Calu3 (cell line): ENCODE measurements at regions of chr14 and their contacts with region 1.

Region 1: DNA sequence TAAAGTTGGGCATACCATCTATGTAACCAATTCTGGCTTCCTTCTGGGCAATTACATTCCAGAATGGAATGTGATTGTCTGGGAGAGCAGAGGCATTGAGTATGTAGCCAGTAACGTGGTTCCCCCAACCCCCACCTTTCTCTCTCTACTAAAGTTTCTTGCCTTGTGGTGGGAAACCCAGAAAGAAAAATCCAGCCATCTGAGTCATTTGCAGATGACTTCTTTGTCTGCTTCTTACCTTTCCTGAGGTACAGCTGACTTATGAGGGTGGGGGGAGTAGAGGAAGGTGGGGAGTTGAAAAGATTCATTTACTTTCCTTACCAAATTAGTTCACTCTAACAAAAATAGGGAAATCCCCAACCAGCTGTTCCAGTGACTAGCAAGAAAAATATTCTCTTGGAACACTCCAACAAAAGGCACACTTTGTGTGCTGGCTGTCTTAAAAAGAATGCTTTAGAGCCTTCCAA is 112.1 kb upstream of the FRMD6 start:
- DNase-seq: peak; percentile 62
- H3K4me3 Mint-ChIP-seq: no peak overlapping the region
- H3K27ac Mint-ChIP-seq: peak overlapping the region; percentile 73
- H3K4me1 Mint-ChIP-seq: peaks cover 53% of the 10 kb centered on the region
- H3K27me3 Mint-ChIP-seq: no peaks in the 10 kb centered on the region
- CTCF ChIP-seq: no peak

Region 2: GRCh38 chr14:50954811-50955372 is 584.7 kb before region 1 on chr14:
- CTCF ChIA-PET with region 1: no interaction called
- intact Hi-C with region 1: loop called (anchors 5 kb)
- DNase-seq: no peak
- H3K4me3 Mint-ChIP-seq: no peak overlapping the region
- H3K27ac Mint-ChIP-seq: peak overlapping the region; percentile 81
- H3K4me1 Mint-ChIP-seq: peaks cover 19% of the 10 kb centered on the region
- H3K27me3 Mint-ChIP-seq: no peaks in the 10 kb centered on the region
- CTCF ChIP-seq: peak; percentile 45

Region 3: GRCh38 chr14:51395361-51395849 is 144.2 kb before region 1 on chr14:
- CTCF ChIA-PET with region 1: no interaction called
- intact Hi-C with region 1: loop called (anchors 10 kb)
- DNase-seq: no peak
- H3K4me3 Mint-ChIP-seq: peak overlapping the region; percentile 33
- H3K27ac Mint-ChIP-seq: peak overlapping the region; percentile 95
- H3K4me1 Mint-ChIP-seq: peaks cover 48% of the 10 kb centered on the region
- H3K27me3 Mint-ChIP-seq: no peaks in the 10 kb centered on the region
- CTCF ChIP-seq: no peak

Region 4: GRCh38 chr14:51430633-51431032 is 109.0 kb before region 1 on chr14:
- CTCF ChIA-PET with region 1: no interaction called
- intact Hi-C with region 1: loop called (anchors 2 kb)
- DNase-seq: no peak
- H3K4me3 Mint-ChIP-seq: peak overlapping the region; percentile 29
- H3K27ac Mint-ChIP-seq: peak overlapping the region; percentile 75
- H3K4me1 Mint-ChIP-seq: peaks cover 22% of the 10 kb centered on the region
- H3K27me3 Mint-ChIP-seq: no peaks in the 10 kb centered on the region
- CTCF ChIP-seq: no peak

Region 5: GRCh38 chr14:51479584-51480325 is 59.8 kb before region 1 on chr14:
- CTCF ChIA-PET with region 1: no interaction called
- intact Hi-C with region 1: no loop called
- DNase-seq: no peak
- H3K4me3 Mint-ChIP-seq: no peak overlapping the region
- H3K27ac Mint-ChIP-seq: no peak overlapping the region
- H3K4me1 Mint-ChIP-seq: no peaks in the 10 kb centered on the region
- H3K27me3 Mint-ChIP-seq: no peaks in the 10 kb centered on the region
- CTCF ChIP-seq: no peak

Region 6: GRCh38 chr14:51651388-51652167 is 112.0 kb after region 1 on chr14 and contains the start of gene FRMD6:
- CTCF ChIA-PET with region 1: no interaction called
- intact Hi-C with region 1: loop called (anchors 10 kb)
- DNase-seq: peak; percentile 84
- H3K4me3 Mint-ChIP-seq: peak within 1 kb of the TSS; percentile 80
- H3K27ac Mint-ChIP-seq: peak within 1 kb of the TSS; percentile 58
- H3K4me1 Mint-ChIP-seq: peaks cover 17% of the 10 kb centered on the region
- H3K27me3 Mint-ChIP-seq: no peaks in the 10 kb centered on the region
- CTCF ChIP-seq: peak; percentile 55
- total RNA-seq, gene FRMD6: 17.0 and 33.3 TPM in 2 replicates